ENCODE measurements at regions of chr9 and their contacts with region 1.

Region 1: GRCh38 chr9:15135164-15135792 is 171.7 kb downstream of the TTC39B start:
- DNase-seq: peak; percentile 57
- ATAC-seq: peak; percentile 88
- H3K4me3 Mint-ChIP-seq: no peak overlapping the region
- H3K27ac Mint-ChIP-seq: no peak overlapping the region
- H3K4me1 Mint-ChIP-seq: peaks cover 7% of the 10 kb centered on the region
- H3K27me3 Mint-ChIP-seq: no peaks in the 10 kb centered on the region

Region 2: GRCh38 chr9:13427587-13427986 is 1707.7 kb before region 1 on chr9:
- CTCF ChIA-PET with region 1: no interaction called
- POLR2A ChIA-PET with region 1: no interaction called
- intact Hi-C with region 1: loop called in 1 of 2 experiments (anchors 10 kb)
- DNase-seq: no peak
- ATAC-seq: no peak
- H3K4me3 Mint-ChIP-seq: no peak overlapping the region
- H3K27ac Mint-ChIP-seq: no peak overlapping the region
- H3K4me1 Mint-ChIP-seq: no peaks in the 10 kb centered on the region
- H3K27me3 Mint-ChIP-seq: no peaks in the 10 kb centered on the region

Region 3: GRCh38 chr9:14768405-14769229 is 366.7 kb before region 1 on chr9:
- CTCF ChIA-PET with region 1: interaction called, 3 read pairs
- POLR2A ChIA-PET with region 1: no interaction called
- intact Hi-C with region 1: loop called in 1 of 2 experiments (anchors 10 kb)
- DNase-seq: no peak
- ATAC-seq: no peak
- H3K4me3 Mint-ChIP-seq: no peak overlapping the region
- H3K27ac Mint-ChIP-seq: no peak overlapping the region
- H3K4me1 Mint-ChIP-seq: no peaks in the 10 kb centered on the region
- H3K27me3 Mint-ChIP-seq: peaks cover 27% of the 10 kb centered on the region

Region 4: DNA sequence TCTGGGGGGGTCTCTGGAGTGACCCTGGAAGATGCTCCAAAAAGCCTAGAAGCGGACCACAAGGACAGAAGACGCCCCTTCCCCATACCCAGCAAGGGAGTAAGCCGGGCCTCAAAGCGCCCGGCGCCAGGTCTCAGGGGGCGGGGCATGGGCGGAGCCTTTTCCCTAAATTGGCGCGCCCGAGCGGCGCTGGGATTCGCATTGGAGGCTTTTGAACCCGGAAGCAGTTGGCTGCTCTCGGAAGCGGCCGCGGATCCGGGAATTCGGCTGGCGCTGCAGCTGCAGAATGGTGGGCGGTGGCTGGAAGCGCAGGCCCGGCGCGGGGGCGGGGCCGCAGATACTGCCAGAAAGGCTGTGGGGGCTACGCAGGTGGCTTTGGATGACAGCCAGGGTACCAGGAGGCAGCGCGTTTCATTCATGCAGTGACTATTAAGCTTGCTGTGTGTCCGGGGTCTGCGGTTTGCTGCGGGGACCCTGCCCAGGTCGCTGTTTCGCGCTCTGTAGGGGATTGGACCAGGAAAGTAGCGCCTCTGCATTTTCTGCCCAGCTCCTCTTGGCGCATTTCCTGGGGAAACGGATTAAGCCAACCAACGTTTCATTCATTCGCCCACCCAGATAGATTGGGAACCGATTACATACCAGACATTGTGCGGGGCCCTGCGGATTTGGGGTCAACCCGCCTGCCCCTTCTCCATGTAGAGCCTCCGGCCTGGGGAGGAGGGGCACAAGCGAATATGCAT is 142.0 kb before region 1 on chr9:
- CTCF ChIA-PET with region 1: no interaction called
- POLR2A ChIA-PET with region 1: no interaction called
- intact Hi-C with region 1: loop called in 1 of 2 experiments (anchors 10 kb)
- DNase-seq: peak; percentile 69
- ATAC-seq: peak; percentile 83
- H3K4me3 Mint-ChIP-seq: peak overlapping the region; percentile 60
- H3K27ac Mint-ChIP-seq: peak overlapping the region; percentile 29
- H3K4me1 Mint-ChIP-seq: peaks cover 23% of the 10 kb centered on the region
- H3K27me3 Mint-ChIP-seq: peaks cover 11% of the 10 kb centered on the region

Region 5: DNA sequence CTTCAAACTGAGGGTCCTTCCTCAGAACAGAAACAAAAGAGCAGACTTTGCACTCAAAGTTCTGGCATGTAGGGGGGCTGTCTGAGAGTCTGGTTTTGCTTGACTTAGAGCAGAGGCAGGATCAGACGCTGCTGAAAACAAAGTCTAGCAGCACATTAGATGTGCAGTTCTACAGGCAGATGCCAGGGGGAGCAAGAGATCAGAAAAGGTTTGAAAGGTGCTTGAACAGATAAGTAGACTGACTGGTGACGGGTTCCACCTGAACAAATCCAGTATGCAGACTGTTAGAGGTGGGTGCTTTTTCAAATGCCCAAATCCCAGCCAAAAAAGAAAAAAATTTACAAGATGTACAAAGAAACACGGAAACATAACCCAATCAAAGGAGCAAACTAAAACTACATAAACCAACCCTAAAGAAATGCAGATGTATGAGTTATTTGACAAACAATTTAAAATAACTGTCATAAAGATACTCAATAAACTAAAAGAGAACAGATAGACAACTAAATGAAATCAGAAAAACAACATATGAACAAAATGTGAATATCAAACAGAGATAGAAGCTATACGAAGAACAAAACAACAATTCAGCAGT is 30.4 kb before region 1 on chr9:
- CTCF ChIA-PET with region 1: interaction called, 100 read pairs
- POLR2A ChIA-PET with region 1: interaction called, 3 read pairs
- intact Hi-C with region 1: loop called (anchors 1 kb)
- DNase-seq: peak; percentile 60
- ATAC-seq: peak; percentile 88
- H3K4me3 Mint-ChIP-seq: no peak overlapping the region
- H3K27ac Mint-ChIP-seq: no peak overlapping the region
- H3K4me1 Mint-ChIP-seq: no peaks in the 10 kb centered on the region
- H3K27me3 Mint-ChIP-seq: peaks cover 6% of the 10 kb centered on the region